Naive thymus-derived CD4-positive, alpha-beta T cell (primary cell): ENCODE measurements at regions of chr4 and their contacts with region 1.

Region 1: DNA sequence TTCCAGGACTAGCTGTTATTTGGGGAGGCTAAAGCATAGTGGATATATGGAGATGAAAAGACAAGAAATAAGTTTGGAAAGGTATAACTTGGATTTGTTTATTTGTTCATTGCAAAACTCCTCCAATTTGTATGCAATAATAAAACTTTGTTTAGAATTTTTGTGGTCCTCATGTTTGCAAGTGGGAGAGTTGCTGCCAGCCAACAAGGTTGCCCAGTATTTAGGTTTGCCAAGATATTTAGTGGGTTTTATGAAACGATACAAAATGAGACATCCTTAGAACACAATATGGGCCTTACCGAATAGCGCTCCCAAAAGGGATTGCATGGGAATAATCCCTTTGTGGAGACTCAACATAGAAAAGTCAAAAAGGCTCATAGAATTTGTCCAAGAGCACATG is 162.1 kb downstream of the INPP4B start:
- DNase-seq: no peak
- ATAC-seq: no peak
- H3K4me3 ChIP-seq: no peak overlapping the region
- H3K4me3 Mint-ChIP-seq: no peak overlapping the region
- H3K27ac ChIP-seq: no peak overlapping the region
- H3K27ac Mint-ChIP-seq: no peak overlapping the region
- H3K4me1 ChIP-seq: no peaks in the 10 kb centered on the region
- H3K4me1 Mint-ChIP-seq: peaks cover 9 to 32% (median 26%) of the 10 kb centered on the region in 7 donors
- H3K27me3 ChIP-seq: no peaks in the 10 kb centered on the region
- H3K27me3 Mint-ChIP-seq: no peaks in the 10 kb centered on the region

Region 2: DNA sequence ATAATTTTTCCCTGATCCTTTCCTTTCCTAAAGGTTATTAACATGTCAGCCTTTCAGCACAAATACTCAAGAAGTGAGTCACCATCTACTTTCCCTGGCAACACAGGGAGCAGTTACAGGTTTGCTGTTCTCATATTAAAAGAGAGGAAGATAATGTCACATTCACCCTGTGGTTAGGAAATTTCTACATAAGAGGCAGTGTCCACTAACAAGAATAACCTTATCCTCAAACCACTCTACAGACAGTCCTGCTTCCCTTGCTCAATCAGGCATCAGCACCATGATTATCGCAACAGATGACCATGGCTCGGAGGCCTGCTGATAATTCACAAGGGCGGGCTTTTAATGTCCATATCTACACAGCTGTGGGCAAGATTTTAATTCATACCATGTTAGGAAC is 1581.6 kb before region 1 on chr4:
- CTCF ChIA-PET with region 1: no interaction called
- POLR2A ChIA-PET with region 1: no interaction called
- intact Hi-C with region 1: no loop called
- DNase-seq: no peak
- ATAC-seq: no peak
- H3K4me3 ChIP-seq: no peak overlapping the region
- H3K4me3 Mint-ChIP-seq: no peak overlapping the region
- H3K27ac ChIP-seq: no peak overlapping the region
- H3K27ac Mint-ChIP-seq: no peak overlapping the region
- H3K4me1 ChIP-seq: no peaks in the 10 kb centered on the region
- H3K4me1 Mint-ChIP-seq: no peaks in the 10 kb centered on the region
- H3K27me3 ChIP-seq: no peaks in the 10 kb centered on the region
- H3K27me3 Mint-ChIP-seq: peaks cover 0 to 11% (median 0%) of the 10 kb centered on the region in 5 donors

Region 3: GRCh38 chr4:142663829-142664228 is 20.2 kb before region 1 on chr4:
- CTCF ChIA-PET with region 1: no interaction called
- POLR2A ChIA-PET with region 1: no interaction called
- intact Hi-C with region 1: loop called in 1 of 2 experiments (anchors 2 kb)
- DNase-seq: no peak
- ATAC-seq: no peak
- H3K4me3 ChIP-seq: no peak overlapping the region
- H3K4me3 Mint-ChIP-seq: no peak overlapping the region
- H3K27ac ChIP-seq: no peak overlapping the region
- H3K27ac Mint-ChIP-seq: no peak overlapping the region
- H3K4me1 ChIP-seq: no peaks in the 10 kb centered on the region
- H3K4me1 Mint-ChIP-seq: no peaks in the 10 kb centered on the region
- H3K27me3 ChIP-seq: no peaks in the 10 kb centered on the region
- H3K27me3 Mint-ChIP-seq: no peaks in the 10 kb centered on the region